ENCODE measurements at regions of chr5 and their contacts with region 1.

Region 1: DNA sequence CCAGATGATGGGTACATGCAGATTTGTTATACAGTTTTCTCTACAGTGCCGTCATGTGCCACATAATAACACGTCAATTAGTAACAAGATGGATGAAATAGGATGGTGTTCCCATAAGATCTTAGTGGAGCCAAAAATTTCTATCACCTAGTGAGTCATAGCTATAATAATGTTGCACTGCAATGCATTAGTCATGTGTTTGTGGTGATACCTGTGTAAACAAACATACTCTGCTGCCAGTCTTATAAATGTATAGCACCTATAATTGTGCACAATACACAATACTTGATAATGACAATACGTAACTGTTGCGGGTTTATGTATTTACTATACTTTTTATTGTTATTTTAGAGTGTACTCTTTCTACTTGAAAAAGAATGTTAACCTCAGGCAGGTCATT is 865.4 kb downstream of the MAT2B start:
- DNase-seq: no peak
- H3K4me3 ChIP-seq: no peak overlapping the region
- H3K27ac ChIP-seq: no peak overlapping the region
- H3K4me1 ChIP-seq: no peaks in the 10 kb centered on the region
- H3K27me3 ChIP-seq: no peaks in the 10 kb centered on the region
- CTCF ChIP-seq: no peak
- POLR2A ChIP-seq: no peak

Region 2: DNA sequence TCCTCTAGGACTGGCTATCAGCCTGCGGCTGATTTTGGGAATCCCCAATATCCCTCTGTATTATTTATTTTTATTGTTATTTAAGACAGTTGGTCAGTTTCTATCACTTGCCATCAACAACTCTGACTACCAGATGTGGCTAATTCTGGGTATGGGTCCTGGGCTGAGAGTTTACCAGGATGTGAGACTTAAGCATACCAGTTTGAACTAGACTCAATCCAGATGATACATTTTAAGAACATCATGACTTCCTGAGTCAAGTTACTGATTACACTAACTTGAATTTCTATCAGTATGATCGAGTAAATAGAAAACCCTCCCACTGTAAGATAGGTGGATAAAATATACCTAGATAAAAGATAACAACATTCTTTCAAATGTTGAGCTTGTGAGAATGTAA is 231.4 kb before region 1 on chr5:
- CTCF ChIA-PET with region 1: no interaction called
- POLR2A ChIA-PET with region 1: no interaction called
- dilution Hi-C with region 1: no loop called
- intact Hi-C with region 1: loop called (anchors 1 kb)
- DNase-seq: no peak
- H3K4me3 ChIP-seq: no peak overlapping the region
- H3K27ac ChIP-seq: no peak overlapping the region
- H3K4me1 ChIP-seq: no peaks in the 10 kb centered on the region
- H3K27me3 ChIP-seq: no peaks in the 10 kb centered on the region
- CTCF ChIP-seq: no peak
- POLR2A ChIP-seq: no peak